ENCODE measurements at regions of chr3 and their contacts with region 1.

Region 1: DNA sequence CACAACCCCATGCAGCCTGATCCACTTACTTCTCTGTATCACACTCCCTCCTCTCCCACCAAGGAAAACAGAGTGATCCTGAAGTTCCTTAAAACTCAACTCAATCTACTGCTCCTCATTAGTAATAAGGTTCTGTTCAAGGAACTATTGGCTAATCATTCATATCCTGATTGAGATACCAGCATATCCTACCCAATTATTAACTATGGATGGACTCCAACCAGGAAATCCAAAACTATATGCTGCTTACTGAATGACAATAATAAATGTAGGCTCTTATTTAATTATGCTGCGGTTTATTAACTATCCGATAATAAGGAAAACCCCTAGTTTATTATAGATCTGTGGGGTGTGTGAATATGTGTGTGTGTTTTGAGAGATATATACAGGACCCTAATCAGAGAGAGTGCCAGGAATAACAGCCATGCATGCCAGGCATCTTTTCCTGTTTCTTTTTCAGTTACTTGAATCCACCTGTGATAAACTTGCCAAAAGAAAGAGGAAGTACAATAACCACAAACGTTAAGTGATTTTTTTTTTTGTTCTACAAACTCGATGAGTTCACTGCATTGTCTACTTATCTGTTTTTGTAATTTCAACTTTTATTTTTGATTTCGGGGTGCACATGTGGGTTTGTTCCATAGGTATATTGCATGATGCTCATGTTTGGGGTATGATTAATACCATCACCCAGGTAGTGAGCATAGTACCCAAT is 1031.7 kb upstream of the CFAP20DC start:
- DNase-seq: no peak
- H3K4me3 Mint-ChIP-seq: peak overlapping the region; percentile 76
- H3K27ac Mint-ChIP-seq: peak overlapping the region; percentile 100
- H3K4me1 Mint-ChIP-seq: peaks cover 64% of the 10 kb centered on the region
- H3K27me3 Mint-ChIP-seq: peaks cover 2% of the 10 kb centered on the region

Region 2: GRCh38 chr3:59286791-59287531 is 794.6 kb before region 1 on chr3:
- intact Hi-C with region 1: loop called (anchors 2 kb)
- DNase-seq: peak; percentile 74
- H3K4me3 Mint-ChIP-seq: peak overlapping the region; percentile 55
- H3K27ac Mint-ChIP-seq: peak overlapping the region; percentile 94
- H3K4me1 Mint-ChIP-seq: peaks cover 32% of the 10 kb centered on the region
- H3K27me3 Mint-ChIP-seq: no peaks in the 10 kb centered on the region

Region 3: DNA sequence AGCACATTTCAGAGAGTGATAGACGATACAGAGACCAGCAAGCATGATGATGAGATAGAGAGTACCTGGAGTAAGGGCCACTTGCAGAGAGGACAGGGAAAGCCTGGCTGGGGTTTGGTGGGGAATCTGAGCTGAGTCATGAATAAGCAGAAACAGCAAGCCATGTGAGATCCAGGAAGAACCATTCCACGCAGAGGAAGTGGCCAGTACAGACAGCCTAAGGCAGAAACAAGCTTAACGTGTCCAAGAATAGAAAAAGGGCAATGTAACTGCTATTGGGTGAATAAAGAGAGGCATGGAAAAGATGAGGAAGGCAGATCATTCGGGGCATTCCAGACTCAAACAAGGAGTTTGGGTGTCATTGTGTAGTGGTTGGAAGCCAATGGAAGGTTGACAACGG is 215.5 kb before region 1 on chr3:
- intact Hi-C with region 1: loop called (anchors 1 kb)
- DNase-seq: no peak
- H3K4me3 Mint-ChIP-seq: no peak overlapping the region
- H3K27ac Mint-ChIP-seq: no peak overlapping the region
- H3K4me1 Mint-ChIP-seq: peaks cover 29% of the 10 kb centered on the region
- H3K27me3 Mint-ChIP-seq: no peaks in the 10 kb centered on the region

Region 4: DNA sequence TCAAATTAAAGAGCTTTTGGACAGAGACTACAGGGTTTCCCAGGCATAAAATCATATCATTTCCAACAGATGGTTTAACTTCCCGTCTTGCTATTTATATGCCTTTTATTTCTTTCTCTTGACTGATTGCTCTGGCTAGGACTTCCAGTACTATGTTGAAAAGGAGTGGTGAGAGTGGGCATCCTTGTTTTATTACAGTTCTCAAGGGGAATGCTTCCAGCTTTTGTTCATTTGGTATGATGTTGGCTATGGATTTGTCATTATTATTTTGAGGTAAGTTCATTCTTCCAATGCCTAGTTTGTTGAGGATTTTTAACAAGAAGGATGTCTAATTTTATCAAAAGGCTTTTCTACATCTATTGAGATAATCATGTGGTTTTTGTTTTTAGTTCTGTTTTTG is 135.1 kb before region 1 on chr3:
- intact Hi-C with region 1: no loop called
- DNase-seq: no peak
- H3K4me3 Mint-ChIP-seq: no peak overlapping the region
- H3K27ac Mint-ChIP-seq: no peak overlapping the region
- H3K4me1 Mint-ChIP-seq: peaks cover 1% of the 10 kb centered on the region
- H3K27me3 Mint-ChIP-seq: no peaks in the 10 kb centered on the region

Region 5: GRCh38 chr3:59978979-59979378 is 102.6 kb before region 1 on chr3:
- intact Hi-C with region 1: loop called (anchors 1 kb)
- DNase-seq: peak; percentile 81
- H3K4me3 Mint-ChIP-seq: peak overlapping the region; percentile 78
- H3K27ac Mint-ChIP-seq: peak overlapping the region; percentile 97
- H3K4me1 Mint-ChIP-seq: peaks cover 33% of the 10 kb centered on the region
- H3K27me3 Mint-ChIP-seq: no peaks in the 10 kb centered on the region

Region 6: DNA sequence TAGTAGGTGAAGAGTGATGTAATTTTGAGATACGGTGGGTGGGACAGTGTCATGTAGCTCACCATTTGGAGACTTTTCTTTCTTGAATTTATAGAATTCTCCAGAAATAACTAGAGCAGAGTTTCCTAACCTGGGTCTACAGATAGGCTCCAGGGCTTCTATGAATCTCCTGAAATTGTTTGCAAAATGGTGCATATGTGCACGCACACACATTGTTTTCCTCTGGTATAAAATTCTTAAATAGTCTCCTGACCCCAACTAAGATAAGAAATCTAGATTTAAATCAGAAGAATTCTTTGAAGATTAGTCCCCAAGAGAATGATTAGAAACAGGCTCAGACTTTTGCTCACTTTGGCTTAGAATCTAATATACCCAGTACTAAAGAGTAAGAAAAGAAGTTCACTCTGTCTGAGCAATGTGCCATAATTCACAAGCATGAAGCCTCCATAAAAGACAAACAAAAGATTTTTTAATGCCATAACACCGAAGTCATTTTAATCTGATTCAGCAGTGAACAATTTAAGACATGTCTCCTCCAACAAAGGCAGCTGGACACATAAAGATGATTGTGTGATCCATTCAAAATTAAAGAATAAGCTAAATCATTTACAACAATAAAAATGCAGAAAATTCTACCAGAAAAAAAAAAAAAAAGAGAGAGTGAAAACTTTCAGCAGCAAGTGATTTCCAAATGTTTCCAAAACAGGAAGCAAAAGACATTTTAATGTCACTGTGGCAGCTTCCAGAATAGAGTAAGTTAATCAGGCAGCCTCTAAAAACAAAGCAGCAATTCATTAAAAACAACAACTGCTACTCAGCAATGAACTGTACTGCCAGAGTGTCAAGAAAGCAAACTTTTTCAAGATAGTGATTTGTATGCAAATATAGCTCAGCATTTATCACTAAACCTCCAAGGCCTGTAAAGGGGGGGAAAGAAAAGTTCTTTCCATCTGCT is 56.2 kb before region 1 on chr3:
- intact Hi-C with region 1: no loop called
- DNase-seq: no peak
- H3K4me3 Mint-ChIP-seq: peak overlapping the region; percentile 54
- H3K27ac Mint-ChIP-seq: peak overlapping the region; percentile 75
- H3K4me1 Mint-ChIP-seq: peaks cover 57% of the 10 kb centered on the region
- H3K27me3 Mint-ChIP-seq: no peaks in the 10 kb centered on the region

Region 7: GRCh38 chr3:60048447-60048848 is 33.1 kb before region 1 on chr3:
- intact Hi-C with region 1: loop called (anchors 1 kb)
- DNase-seq: peak; percentile 91
- H3K4me3 Mint-ChIP-seq: peak overlapping the region; percentile 80
- H3K27ac Mint-ChIP-seq: peak overlapping the region; percentile 91
- H3K4me1 Mint-ChIP-seq: peaks cover 70% of the 10 kb centered on the region
- H3K27me3 Mint-ChIP-seq: no peaks in the 10 kb centered on the region

Region 8: GRCh38 chr3:60064210-60065178 is 17.0 kb before region 1 on chr3:
- intact Hi-C with region 1: loop called (anchors 2 kb)
- DNase-seq: peak; percentile 71
- H3K4me3 Mint-ChIP-seq: peak overlapping the region; percentile 43
- H3K27ac Mint-ChIP-seq: peak overlapping the region; percentile 89
- H3K4me1 Mint-ChIP-seq: peaks cover 61% of the 10 kb centered on the region
- H3K27me3 Mint-ChIP-seq: no peaks in the 10 kb centered on the region

Region 9: GRCh38 chr3:60142009-60142408 is 60.5 kb after region 1 on chr3:
- intact Hi-C with region 1: no loop called
- DNase-seq: no peak
- H3K4me3 Mint-ChIP-seq: no peak overlapping the region
- H3K27ac Mint-ChIP-seq: no peak overlapping the region
- H3K4me1 Mint-ChIP-seq: peaks cover 4% of the 10 kb centered on the region
- H3K27me3 Mint-ChIP-seq: no peaks in the 10 kb centered on the region

Region 10: GRCh38 chr3:60365360-60365759 is 283.8 kb after region 1 on chr3:
- intact Hi-C with region 1: loop called (anchors 1 kb)
- DNase-seq: no peak
- H3K4me3 Mint-ChIP-seq: no peak overlapping the region
- H3K27ac Mint-ChIP-seq: peak overlapping the region; percentile 51
- H3K4me1 Mint-ChIP-seq: peaks cover 18% of the 10 kb centered on the region
- H3K27me3 Mint-ChIP-seq: no peaks in the 10 kb centered on the region

Region 11: GRCh38 chr3:60417592-60417991 is 336.1 kb after region 1 on chr3:
- intact Hi-C with region 1: no loop called
- DNase-seq: no peak
- H3K4me3 Mint-ChIP-seq: no peak overlapping the region
- H3K27ac Mint-ChIP-seq: no peak overlapping the region
- H3K4me1 Mint-ChIP-seq: no peaks in the 10 kb centered on the region
- H3K27me3 Mint-ChIP-seq: no peaks in the 10 kb centered on the region

Measured in activated CD4-positive, alpha-beta T cell treated with anti-CD3 and anti-CD28 coated beads, Interleukin-2, amount 10 ng/mL, durations not matched to agents 24 days and 14 days (primary cell).